Caco-2 (cell line): ENCODE measurements at regions of chr3 and their contacts with region 1.

Region 1: GRCh38 chr3:49339945-49340800 is at the start of gene USP4:
- DNase-seq: peak; percentile 93 to 94
- H3K4me3 ChIP-seq: peak within 1 kb of the TSS; percentile 73
- H3K4me3 Mint-ChIP-seq: peak within 1 kb of the TSS; percentile 91
- H3K27ac Mint-ChIP-seq: peak within 1 kb of the TSS; percentile 90
- H3K4me1 ChIP-seq: 0 out of 2 replicates have a peak, but pooled peaks cover 4% of the 10 kb centered on the region
- H3K4me1 Mint-ChIP-seq: peaks cover 16% of the 10 kb centered on the region
- H3K27me3 ChIP-seq: no peaks in the 10 kb centered on the region
- H3K27me3 Mint-ChIP-seq: no peaks in the 10 kb centered on the region
- CTCF ChIP-seq: peak; percentile 15 to 81
- total RNA-seq, gene USP4: 36.4 and 37.8 TPM in 2 replicates

Region 2: DNA sequence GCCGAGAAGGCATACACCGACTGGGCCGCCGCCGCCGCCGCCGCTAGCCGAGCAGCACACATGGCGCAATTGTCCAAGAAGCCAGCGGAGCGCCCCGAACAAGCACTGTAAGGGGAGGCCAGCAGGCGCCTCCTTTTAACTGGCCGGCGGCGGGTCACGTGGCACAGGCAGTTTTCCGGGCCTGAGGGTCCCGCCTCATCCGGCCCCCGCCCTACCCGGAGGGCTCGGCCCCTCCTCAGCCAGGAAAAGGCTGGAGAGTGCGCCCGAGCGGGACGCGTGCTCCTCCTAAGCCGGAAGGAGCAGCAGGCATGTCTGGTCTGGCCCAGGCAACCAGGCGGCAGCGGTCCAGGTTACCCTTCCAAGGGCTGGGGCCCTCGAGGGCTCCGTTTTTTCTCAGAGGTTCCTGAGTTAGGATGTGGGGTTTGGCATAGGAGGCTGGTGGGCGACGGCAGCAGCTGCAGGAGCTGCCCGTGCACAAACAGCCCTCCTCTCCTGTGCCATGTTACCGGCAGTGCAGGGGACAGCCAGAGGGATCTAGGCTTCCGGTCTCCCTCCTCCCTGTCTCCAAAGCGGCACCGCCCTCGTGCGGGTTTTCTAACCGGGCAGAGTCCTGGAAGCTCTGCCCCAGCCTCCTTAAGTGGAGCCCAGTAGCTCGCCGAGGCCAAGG is 18.2 kb after region 1 on chr3 and contains the start of gene GPX1:
- CTCF ChIA-PET with region 1: interaction called, 9 read pairs
- POLR2A ChIA-PET with region 1: interaction called, 17 read pairs
- intact Hi-C with region 1: loop called (anchors 1 kb)
- DNase-seq: peak; percentile 97 to 98
- H3K4me3 ChIP-seq: peak within 1 kb of the TSS; percentile 81
- H3K4me3 Mint-ChIP-seq: peak within 1 kb of the TSS; percentile 96
- H3K27ac Mint-ChIP-seq: peak within 1 kb of the TSS; percentile 97
- H3K4me1 ChIP-seq: peaks cover 13% of the 10 kb centered on the region; the same call in 1 of the 2 replicates
- H3K4me1 Mint-ChIP-seq: peaks cover 6% of the 10 kb centered on the region
- H3K27me3 ChIP-seq: no peaks in the 10 kb centered on the region
- H3K27me3 Mint-ChIP-seq: no peaks in the 10 kb centered on the region
- CTCF ChIP-seq: no peak
- total RNA-seq, gene GPX1: 197 and 201 TPM in 2 replicates

Region 3: DNA sequence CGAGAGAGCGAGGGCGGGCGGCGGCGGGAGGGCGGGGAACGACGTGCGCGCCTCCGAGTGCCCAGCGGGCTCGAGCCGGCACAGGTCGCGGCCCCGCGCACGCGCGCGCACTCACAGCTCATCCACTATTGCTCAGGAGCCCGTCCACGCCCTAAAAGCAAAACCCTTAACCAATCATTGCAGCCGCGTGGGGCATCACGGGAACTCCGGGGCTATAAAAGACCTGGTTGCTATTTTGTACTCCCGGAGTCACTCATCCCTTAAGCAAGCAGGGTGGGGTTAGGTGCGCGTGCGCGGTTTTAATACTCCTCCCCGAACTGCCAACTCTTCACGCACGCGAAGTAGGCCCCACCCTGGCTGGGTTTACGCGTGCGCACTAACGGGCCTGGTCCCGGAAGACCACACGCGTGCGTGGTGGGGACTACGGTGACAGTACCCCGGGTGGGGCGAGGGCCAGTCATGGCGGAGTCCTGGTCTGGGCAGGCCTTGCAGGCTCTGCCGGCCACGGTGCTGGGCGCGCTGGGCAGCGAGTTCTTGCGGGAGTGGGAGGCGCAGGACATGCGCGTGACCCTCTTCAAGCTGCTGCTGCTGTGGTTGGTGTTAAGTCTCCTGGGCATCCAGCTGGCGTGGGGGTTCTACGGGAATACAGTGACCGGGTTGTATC is 71.9 kb after region 1 on chr3 and contains the starts of genes RHOA and TCTA:
- CTCF ChIA-PET with region 1: interaction called, 16 read pairs
- POLR2A ChIA-PET with region 1: interaction called, 34 read pairs
- intact Hi-C with region 1: loop called (anchors 1 kb)
- DNase-seq: peak; percentile 98 to 100
- H3K4me3 ChIP-seq: peak within 1 kb of the TSS; percentile 93
- H3K4me3 Mint-ChIP-seq: peak within 1 kb of the TSS; percentile 88
- H3K27ac Mint-ChIP-seq: peak within 1 kb of the TSS; percentile 94
- H3K4me1 ChIP-seq: peaks cover 25% of the 10 kb centered on the region
- H3K4me1 Mint-ChIP-seq: peaks cover 23% of the 10 kb centered on the region
- H3K27me3 ChIP-seq: no peaks in the 10 kb centered on the region
- H3K27me3 Mint-ChIP-seq: no peaks in the 10 kb centered on the region
- CTCF ChIP-seq: no peak
- total RNA-seq, gene RHOA: 338 and 348 TPM in 2 replicates
- total RNA-seq, gene TCTA: 14.2 and 15.5 TPM in 2 replicates

Region 4: DNA sequence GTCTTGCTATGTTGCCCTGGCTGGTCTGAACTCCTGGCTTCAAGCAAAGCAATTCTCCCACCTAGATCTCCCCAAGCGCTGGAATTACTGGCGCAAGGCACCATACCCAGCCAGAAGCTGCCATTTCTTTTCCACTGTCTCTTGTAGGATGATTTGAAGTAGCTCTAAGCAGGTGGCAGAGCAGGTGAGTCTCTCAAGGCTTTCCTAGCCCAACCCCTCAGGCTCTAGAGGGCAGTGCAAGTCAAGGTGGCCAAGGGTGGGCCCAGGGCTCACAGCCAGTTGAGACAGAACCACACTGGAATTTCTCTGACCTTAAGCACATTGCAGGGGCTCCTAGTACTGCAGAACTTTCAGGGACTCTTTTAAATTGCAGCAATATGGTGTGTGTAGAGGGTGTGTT is 114.3 kb after region 1 on chr3:
- CTCF ChIA-PET with region 1: interaction called, 60 read pairs
- POLR2A ChIA-PET with region 1: interaction called, 14 read pairs
- intact Hi-C with region 1: loop called (anchors 1 kb)
- DNase-seq: peak; percentile 83 to 85
- H3K4me3 ChIP-seq: no peak overlapping the region
- H3K4me3 Mint-ChIP-seq: no peak overlapping the region
- H3K27ac Mint-ChIP-seq: peak overlapping the region; percentile 60
- H3K4me1 ChIP-seq: peaks cover 29% of the 10 kb centered on the region
- H3K4me1 Mint-ChIP-seq: peaks cover 19% of the 10 kb centered on the region
- H3K27me3 ChIP-seq: no peaks in the 10 kb centered on the region
- H3K27me3 Mint-ChIP-seq: no peaks in the 10 kb centered on the region
- CTCF ChIP-seq: peak; percentile 39 to 87

Region 5: GRCh38 chr3:49673715-49674496 is 333.7 kb after region 1 on chr3 and contains the start of gene APEH:
- CTCF ChIA-PET with region 1: interaction called, 7 read pairs
- POLR2A ChIA-PET with region 1: interaction called, 3 read pairs
- intact Hi-C with region 1: loop called (anchors 1 kb)
- DNase-seq: peak; percentile 99
- H3K4me3 ChIP-seq: peak within 1 kb of the TSS; percentile 75
- H3K4me3 Mint-ChIP-seq: peak within 1 kb of the TSS; percentile 93
- H3K27ac Mint-ChIP-seq: peak within 1 kb of the TSS; percentile 96
- H3K4me1 ChIP-seq: peaks cover 7% of the 10 kb centered on the region; the same call in 1 of the 2 replicates
- H3K4me1 Mint-ChIP-seq: peaks cover 11% of the 10 kb centered on the region
- H3K27me3 ChIP-seq: no peaks in the 10 kb centered on the region
- H3K27me3 Mint-ChIP-seq: no peaks in the 10 kb centered on the region
- CTCF ChIP-seq: no peak
- total RNA-seq, gene APEH: 236 and 279 TPM in 2 replicates